Activated B cell treated with CpG ODN at 0.5 μM for 24 hours (primary cell): ENCODE measurements at regions of chr6 and their contacts with region 1.

Region 1: DNA sequence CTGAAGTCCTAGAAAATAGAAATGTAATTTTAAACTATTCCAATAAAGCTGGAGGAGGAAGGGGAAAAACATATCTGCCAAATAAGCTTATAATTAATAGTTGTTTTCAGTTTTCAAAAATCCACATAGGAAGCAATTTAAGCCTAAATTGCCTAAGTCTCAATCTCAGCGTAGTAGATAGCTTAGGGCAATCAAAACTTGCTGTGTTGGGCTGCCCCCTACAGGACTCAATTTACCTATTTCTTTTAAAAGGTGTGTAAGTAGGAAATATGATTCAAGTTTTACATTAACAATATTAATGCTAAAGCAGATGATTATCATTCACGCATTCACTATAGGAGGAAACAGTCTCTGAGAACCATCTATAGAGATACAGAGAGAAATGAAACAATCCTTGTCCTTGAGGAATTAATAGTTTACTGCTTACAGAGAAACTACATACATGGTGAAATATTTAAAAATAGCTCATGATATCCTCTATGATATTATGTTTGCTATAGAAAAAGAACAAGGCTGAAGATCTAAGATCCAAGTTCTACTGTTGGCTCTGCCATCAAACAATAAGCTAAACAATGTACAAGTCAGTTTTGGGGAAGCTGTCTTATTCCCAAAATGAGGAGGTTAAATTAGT is 102.1 kb downstream of the ATG5 start:
- DNase-seq: no peak
- ATAC-seq: peak; percentile 72
- H3K4me3 Mint-ChIP-seq: no peak overlapping the region
- H3K27ac Mint-ChIP-seq: no peak overlapping the region
- H3K4me1 Mint-ChIP-seq: peaks cover 8% of the 10 kb centered on the region
- H3K27me3 Mint-ChIP-seq: no peaks in the 10 kb centered on the region
- CTCF ChIP-seq: peak; percentile 17

Region 2: GRCh38 chr6:105431226-105431625 is 792.2 kb before region 1 on chr6:
- CTCF ChIA-PET with region 1: interaction called, 29 read pairs
- POLR2A ChIA-PET with region 1: interaction called, 3 read pairs
- intact Hi-C with region 1: loop called (anchors 1 kb)
- DNase-seq: no peak
- ATAC-seq: no peak
- H3K4me3 Mint-ChIP-seq: no peak overlapping the region
- H3K27ac Mint-ChIP-seq: no peak overlapping the region
- H3K4me1 Mint-ChIP-seq: no peaks in the 10 kb centered on the region
- H3K27me3 Mint-ChIP-seq: peaks cover 8% of the 10 kb centered on the region
- CTCF ChIP-seq: no peak

Region 3: GRCh38 chr6:105733565-105734162 is 489.8 kb before region 1 on chr6:
- CTCF ChIA-PET with region 1: interaction called, 27 read pairs
- POLR2A ChIA-PET with region 1: no interaction called
- intact Hi-C with region 1: loop called (anchors 1 kb)
- DNase-seq: no peak
- ATAC-seq: no peak
- H3K4me3 Mint-ChIP-seq: no peak overlapping the region
- H3K27ac Mint-ChIP-seq: no peak overlapping the region
- H3K4me1 Mint-ChIP-seq: no peaks in the 10 kb centered on the region
- H3K27me3 Mint-ChIP-seq: no peaks in the 10 kb centered on the region
- CTCF ChIP-seq: peak; percentile 39

Region 4: DNA sequence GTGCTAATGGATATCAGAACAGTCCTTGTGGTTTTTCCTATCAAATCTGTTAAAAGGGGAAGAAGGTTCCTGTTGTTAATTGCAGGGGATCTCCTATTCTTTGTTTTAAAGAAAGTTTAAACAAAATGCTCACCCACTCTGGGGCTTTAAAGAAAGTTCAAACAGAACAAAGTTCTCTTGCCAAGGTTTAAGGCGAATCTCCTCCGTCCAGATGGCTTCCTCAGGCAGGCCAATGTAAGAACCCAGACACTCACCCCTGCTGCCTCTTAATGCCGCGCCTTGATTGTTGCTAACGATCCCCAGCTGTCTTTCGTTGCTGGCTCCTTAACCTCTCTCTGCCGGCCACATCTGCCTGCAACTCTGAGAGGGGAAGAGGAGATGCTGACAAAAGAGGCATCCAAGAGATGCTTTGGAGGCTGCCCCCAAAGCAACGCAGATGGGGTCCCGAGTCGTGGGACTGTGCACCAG is 372.3 kb before region 1 on chr6:
- CTCF ChIA-PET with region 1: no interaction called
- POLR2A ChIA-PET with region 1: no interaction called
- intact Hi-C with region 1: loop called (anchors 5 kb)
- DNase-seq: no peak
- ATAC-seq: no peak
- H3K4me3 Mint-ChIP-seq: no peak overlapping the region
- H3K27ac Mint-ChIP-seq: no peak overlapping the region
- H3K4me1 Mint-ChIP-seq: no peaks in the 10 kb centered on the region
- H3K27me3 Mint-ChIP-seq: no peaks in the 10 kb centered on the region
- CTCF ChIP-seq: no peak

Region 5: GRCh38 chr6:106141441-106142237 is 81.8 kb before region 1 on chr6:
- CTCF ChIA-PET with region 1: interaction called, 13 read pairs
- POLR2A ChIA-PET with region 1: no interaction called
- intact Hi-C with region 1: no loop called
- DNase-seq: no peak
- ATAC-seq: peak; percentile 72
- H3K4me3 Mint-ChIP-seq: peak overlapping the region; percentile 69
- H3K27ac Mint-ChIP-seq: peak overlapping the region; percentile 88
- H3K4me1 Mint-ChIP-seq: peaks cover 43% of the 10 kb centered on the region
- H3K27me3 Mint-ChIP-seq: no peaks in the 10 kb centered on the region
- CTCF ChIP-seq: no peak

Region 6: DNA sequence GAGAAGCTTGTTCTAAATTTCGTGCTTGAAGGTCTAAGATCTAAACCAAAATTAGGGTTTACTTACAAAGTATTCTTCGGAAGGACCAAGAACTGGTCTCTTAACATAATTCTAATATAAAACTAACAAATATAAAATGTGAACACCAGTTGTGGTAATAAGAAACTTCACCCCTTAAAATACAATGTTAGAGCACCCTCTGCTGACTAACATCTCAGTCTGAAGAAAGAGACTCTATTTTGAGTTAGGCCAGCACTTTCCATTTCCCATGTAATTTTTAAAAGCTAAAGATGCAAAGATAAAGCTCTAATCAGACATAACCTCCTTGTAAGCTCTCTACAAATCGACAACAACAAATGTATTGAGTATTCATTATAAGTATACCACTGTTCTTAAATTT is 77.5 kb after region 1 on chr6:
- CTCF ChIA-PET with region 1: interaction called, 7 read pairs
- POLR2A ChIA-PET with region 1: no interaction called
- intact Hi-C with region 1: loop called (anchors 5 kb)
- DNase-seq: no peak
- ATAC-seq: no peak
- H3K4me3 Mint-ChIP-seq: no peak overlapping the region
- H3K27ac Mint-ChIP-seq: no peak overlapping the region
- H3K4me1 Mint-ChIP-seq: no peaks in the 10 kb centered on the region
- H3K27me3 Mint-ChIP-seq: no peaks in the 10 kb centered on the region
- CTCF ChIP-seq: no peak